Naive thymus-derived CD4-positive, alpha-beta T cell (primary cell): ENCODE measurements at regions of chr3 and their contacts with region 1.

Region 1: DNA sequence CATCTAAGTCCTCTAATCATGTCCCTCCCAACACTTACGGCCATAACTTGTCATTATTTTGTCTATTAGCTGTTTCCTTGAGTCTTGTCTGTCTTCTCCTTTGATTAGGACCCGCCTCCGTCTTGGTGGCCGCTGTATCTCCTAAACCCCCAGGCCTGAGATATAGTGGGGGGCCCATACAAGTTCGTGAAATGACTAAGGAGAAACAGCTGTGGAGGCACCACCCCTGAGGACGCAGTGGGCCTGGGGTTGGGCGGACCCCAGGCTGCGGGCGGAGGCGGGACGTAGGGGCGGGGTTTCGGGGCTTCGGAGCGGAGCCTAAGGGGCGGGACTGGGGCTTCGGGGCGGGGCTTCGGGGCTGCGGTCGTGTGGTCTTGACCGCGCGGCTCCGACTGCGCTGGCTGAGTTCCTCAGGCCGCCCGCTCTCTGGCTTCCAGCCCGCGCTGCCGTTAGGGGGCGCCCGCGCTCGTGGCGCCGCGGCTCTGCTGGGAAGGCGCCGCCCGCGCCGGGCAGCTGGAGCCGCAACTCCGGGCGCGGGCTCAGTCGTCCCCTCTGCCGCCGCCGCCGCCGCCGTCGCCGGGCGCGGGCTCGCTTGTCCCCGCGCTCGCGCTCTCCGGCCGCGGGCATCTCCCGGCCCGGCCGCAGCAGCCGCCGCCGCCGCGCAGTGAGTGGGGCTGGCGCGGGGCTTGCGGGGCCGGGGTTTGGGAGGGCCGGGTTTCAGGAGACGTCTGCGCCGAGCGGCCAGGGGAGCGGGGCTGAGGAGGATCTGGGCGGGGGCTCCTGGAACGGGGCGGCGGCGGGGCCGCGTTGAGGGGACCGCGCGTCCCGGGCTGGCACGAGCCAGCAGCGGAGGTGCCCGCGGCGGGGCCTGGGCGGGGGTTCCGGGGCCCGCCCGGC is at the start of gene KCTD6:
- DNase-seq: peak; percentile 72 to 95 (median 84)
- ATAC-seq: peak; percentile 93
- H3K4me3 ChIP-seq: peak within 1 kb of the TSS; percentile 95
- H3K4me3 Mint-ChIP-seq: peak within 1 kb of the TSS; percentile 92 to 99 (median 94)
- H3K27ac ChIP-seq: peak within 1 kb of the TSS; percentile 69
- H3K27ac Mint-ChIP-seq: peak within 1 kb of the TSS; percentile 83 to 97 (median 90)
- H3K4me1 ChIP-seq: peaks cover 22 to 25% of the 10 kb centered on the region in 2 donors
- H3K4me1 Mint-ChIP-seq: peaks cover 37 to 64% (median 59%) of the 10 kb centered on the region in 7 donors
- H3K27me3 ChIP-seq: no peaks in the 10 kb centered on the region
- H3K27me3 Mint-ChIP-seq: peaks cover 0 to 45% (median 0%) of the 10 kb centered on the region in 5 donors
- total RNA-seq, gene KCTD6: 4.8 to 14.2 (median 10.9) TPM

Region 2: DNA sequence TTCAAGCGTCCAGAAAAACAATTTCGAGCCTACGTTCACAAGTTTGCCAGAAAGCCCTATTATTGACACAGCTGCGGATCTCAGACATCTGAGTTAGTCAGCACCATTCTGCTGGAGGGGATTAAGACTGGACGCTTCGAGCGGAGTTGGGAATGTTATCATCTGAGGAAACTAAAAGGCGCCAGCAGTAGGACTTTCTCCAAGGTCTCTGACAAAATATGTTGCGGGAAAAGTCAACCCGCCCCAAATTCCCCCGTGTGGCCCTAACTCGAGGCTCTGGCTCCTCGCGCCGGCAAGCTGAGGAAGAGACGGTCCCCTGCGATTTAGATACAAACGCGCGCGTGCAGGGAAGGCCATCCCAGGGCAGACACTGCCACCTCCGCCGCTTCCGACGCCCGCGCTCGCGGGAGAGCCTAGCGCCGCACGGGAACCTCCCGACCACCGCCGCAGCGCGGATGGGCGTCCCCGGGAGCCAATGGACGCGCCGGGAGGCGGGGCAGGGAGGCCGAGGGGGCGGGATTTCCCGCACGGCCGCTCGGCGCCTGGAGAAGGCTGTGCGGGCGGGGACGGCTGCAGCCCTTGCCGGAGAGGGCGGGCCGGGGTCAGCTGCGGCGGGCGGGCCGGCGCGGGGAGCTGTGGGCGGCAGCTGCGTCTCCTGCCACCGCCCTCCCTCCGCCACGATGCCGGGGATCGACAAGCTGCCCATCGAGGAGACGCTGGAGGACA is 1264.4 kb before region 1 on chr3 and contains the start of gene APPL1:
- CTCF ChIA-PET with region 1: no interaction called
- POLR2A ChIA-PET with region 1: no interaction called
- intact Hi-C with region 1: loop called in 1 of 2 experiments (anchors 5 kb)
- DNase-seq: peak; percentile 76 to 97 (median 82)
- ATAC-seq: peak; percentile 96
- H3K4me3 ChIP-seq: peak within 1 kb of the TSS; percentile 88
- H3K4me3 Mint-ChIP-seq: peak within 1 kb of the TSS; percentile 89 to 95 (median 93)
- H3K27ac ChIP-seq: peak within 1 kb of the TSS; percentile 71
- H3K27ac Mint-ChIP-seq: peak within 1 kb of the TSS; percentile 72 to 90 (median 86)
- H3K4me1 ChIP-seq: peaks cover 9 to 12% of the 10 kb centered on the region in 2 donors
- H3K4me1 Mint-ChIP-seq: peaks cover 17 to 38% (median 29%) of the 10 kb centered on the region in 7 donors
- H3K27me3 ChIP-seq: no peaks in the 10 kb centered on the region
- H3K27me3 Mint-ChIP-seq: peaks cover 0 to 5% (median 0%) of the 10 kb centered on the region in 5 donors
- total RNA-seq, gene APPL1: 25.4 to 42.1 (median 29.2) TPM

Region 3: GRCh38 chr3:58237238-58237940 is 254.4 kb before region 1 on chr3 and contains the start of gene ABHD6:
- CTCF ChIA-PET with region 1: no interaction called
- POLR2A ChIA-PET with region 1: interaction called, 3 read pairs
- intact Hi-C with region 1: loop called (anchors 1 kb)
- DNase-seq: peak; percentile 58 to 95 (median 86)
- ATAC-seq: peak; percentile 91
- H3K4me3 ChIP-seq: peak within 1 kb of the TSS; percentile 86
- H3K4me3 Mint-ChIP-seq: peak within 1 kb of the TSS; percentile 84 to 98 (median 92)
- H3K27ac ChIP-seq: peak within 1 kb of the TSS; percentile 72
- H3K27ac Mint-ChIP-seq: peak within 1 kb of the TSS; percentile 50 to 87 (median 81)
- H3K4me1 ChIP-seq: peaks cover 6 to 12% of the 10 kb centered on the region in 2 donors
- H3K4me1 Mint-ChIP-seq: peaks cover 9 to 18% (median 13%) of the 10 kb centered on the region in 7 donors
- H3K27me3 ChIP-seq: no peaks in the 10 kb centered on the region
- H3K27me3 Mint-ChIP-seq: peaks cover 0 to 29% (median 13%) of the 10 kb centered on the region in 5 donors
- total RNA-seq, gene ABHD6: 3.1 to 7.3 (median 6.6) TPM

Region 4: DNA sequence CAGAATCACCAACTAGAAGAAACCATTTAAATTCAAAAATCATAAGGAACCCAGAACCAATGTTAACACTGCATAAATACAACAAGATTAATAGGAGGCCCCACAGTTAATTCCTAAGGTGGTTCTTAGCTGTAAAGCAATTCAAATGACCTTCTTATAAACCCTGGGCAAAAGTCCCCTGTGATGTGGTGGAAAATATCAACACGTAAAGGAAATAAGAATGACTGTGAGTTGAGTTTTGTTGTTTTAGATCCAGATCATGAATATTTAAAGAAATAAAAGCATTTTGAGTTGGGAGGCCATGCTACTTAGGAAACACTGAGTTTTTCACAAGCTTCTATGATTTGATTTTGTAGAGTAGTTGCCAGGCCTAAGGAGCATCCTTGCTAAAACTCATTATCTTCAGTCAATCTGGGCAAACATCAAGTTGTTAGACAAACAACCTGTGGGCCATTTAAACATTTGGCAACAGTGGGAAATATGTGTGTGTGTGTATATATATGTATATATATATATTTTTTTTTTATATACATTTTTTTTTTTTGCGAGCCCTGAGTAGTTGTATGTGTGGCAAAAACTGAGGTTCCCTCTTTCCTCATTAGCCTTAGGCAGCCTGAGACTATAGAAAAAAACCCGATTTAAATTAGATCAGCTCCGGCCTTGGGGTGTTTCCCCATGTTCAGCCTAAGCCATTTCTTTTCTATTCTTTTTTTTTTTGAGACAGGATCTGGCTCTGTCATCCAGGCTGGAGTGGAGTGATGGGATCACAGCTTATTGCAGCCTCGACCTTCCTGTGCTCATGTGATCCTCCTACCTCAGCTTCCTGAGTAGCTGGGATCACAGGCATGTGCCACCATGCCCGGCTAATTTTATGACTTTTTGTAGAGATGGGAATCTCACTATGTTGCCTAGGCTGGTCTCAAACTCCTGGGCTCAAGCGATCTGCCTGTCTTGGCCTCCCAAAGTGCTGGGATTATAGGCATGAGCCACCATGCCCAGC is 167.1 kb before region 1 on chr3:
- CTCF ChIA-PET with region 1: interaction called, 4 read pairs
- POLR2A ChIA-PET with region 1: no interaction called
- intact Hi-C with region 1: loop called in 1 of 2 experiments (anchors 1 kb)
- DNase-seq: peak in 1 of 9 donors; percentile 26
- ATAC-seq: peak; percentile 27
- H3K4me3 ChIP-seq: no peak overlapping the region
- H3K4me3 Mint-ChIP-seq: peak overlapping the region in 1 of 10 donors; percentile 24
- H3K27ac ChIP-seq: peak overlapping the region; percentile 14
- H3K27ac Mint-ChIP-seq: peak overlapping the region in 8 of 9 donors; percentile 25 to 85 (median 68)
- H3K4me1 ChIP-seq: no peaks in the 10 kb centered on the region
- H3K4me1 Mint-ChIP-seq: peaks cover 0 to 25% (median 18%) of the 10 kb centered on the region in 7 donors
- H3K27me3 ChIP-seq: no peaks in the 10 kb centered on the region
- H3K27me3 Mint-ChIP-seq: no peaks in the 10 kb centered on the region

Region 5: DNA sequence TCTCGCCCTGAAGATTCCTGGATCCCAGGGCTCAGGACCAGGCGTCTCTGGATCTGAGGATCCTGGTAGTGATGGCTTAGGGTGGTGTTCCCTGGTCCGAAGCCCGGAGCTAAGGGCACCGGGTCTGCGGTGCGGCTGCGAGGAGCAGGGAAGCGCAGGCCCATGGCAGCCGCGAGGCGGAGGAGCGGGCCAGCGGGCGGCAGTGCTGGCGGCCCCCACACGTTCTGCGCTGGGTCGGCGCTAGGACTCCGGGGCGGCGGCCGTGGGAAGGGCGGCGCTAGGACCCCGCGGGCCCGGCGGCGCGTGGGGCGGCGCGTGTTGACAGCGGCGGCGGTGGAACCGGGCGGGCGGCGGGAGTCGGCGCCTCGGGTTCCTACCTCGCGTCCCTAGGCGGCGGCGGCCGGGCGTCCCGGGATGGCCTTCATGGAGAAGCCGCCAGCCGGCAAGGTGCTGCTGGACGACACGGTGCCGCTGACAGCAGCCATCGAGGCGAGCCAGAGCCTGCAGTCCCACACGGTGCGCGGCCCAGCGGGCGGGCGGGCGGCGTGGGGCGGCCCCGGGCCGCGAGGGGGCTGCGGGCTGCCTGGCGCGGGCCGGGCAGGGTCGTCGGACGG is 159.1 kb before region 1 on chr3 and contains the start of gene PXK:
- CTCF ChIA-PET with region 1: interaction called, 7 read pairs
- POLR2A ChIA-PET with region 1: interaction called, 5 read pairs
- intact Hi-C with region 1: loop called (anchors 1 kb)
- DNase-seq: peak; percentile 63 to 89 (median 79)
- ATAC-seq: peak; percentile 94
- H3K4me3 ChIP-seq: peak within 1 kb of the TSS; percentile 68
- H3K4me3 Mint-ChIP-seq: peak within 1 kb of the TSS; percentile 83 to 100 (median 99)
- H3K27ac ChIP-seq: peak within 1 kb of the TSS; percentile 70
- H3K27ac Mint-ChIP-seq: peak within 1 kb of the TSS; percentile 65 to 97 (median 88)
- H3K4me1 ChIP-seq: peaks cover 20 to 22% of the 10 kb centered on the region in 2 donors
- H3K4me1 Mint-ChIP-seq: peaks cover 30 to 47% (median 38%) of the 10 kb centered on the region in 7 donors
- H3K27me3 ChIP-seq: no peaks in the 10 kb centered on the region
- H3K27me3 Mint-ChIP-seq: no peaks in the 10 kb centered on the region
- total RNA-seq, gene PXK: 17.3 to 38.9 (median 22.3) TPM

Region 6: DNA sequence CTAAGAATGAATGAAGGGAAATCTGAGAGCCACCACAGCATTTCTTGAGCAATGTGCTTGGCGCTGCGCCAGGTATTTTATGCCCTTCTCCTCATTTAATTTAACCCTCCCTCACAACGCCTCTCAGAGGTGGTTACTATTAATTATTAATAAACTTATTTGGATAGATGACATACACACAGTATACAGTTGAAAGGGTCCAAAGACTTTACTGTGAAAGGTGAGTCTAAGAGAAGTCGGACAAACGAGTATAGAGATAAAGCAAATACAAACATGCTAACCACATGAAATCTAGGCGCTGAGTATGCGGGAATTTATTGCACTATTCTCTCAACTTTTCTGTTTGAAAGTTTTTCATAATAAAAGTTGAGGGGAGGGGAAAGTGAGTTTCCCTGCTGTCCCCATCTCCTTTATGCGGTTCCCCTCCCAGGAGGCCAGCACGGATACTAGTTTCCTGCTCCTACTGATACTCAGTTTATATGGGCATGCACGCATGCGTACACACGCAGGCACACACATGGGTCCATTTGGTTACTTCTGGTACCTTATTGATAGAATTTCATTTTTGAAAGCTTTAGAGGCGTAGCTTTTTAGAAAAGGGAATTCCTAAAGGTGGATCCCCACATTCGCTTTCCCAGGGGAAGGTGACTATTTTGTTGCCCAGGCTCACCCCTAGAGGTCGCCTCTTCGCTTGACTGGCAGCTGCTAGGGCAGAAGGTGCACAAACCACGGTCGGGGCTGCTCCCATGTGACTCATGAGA is 28.4 kb before region 1 on chr3:
- CTCF ChIA-PET with region 1: no interaction called
- POLR2A ChIA-PET with region 1: no interaction called
- intact Hi-C with region 1: loop called (anchors 1 kb)
- DNase-seq: peak; percentile 16 to 76 (median 40)
- ATAC-seq: peak; percentile 98
- H3K4me3 ChIP-seq: peak overlapping the region; percentile 20
- H3K4me3 Mint-ChIP-seq: peak overlapping the region in 7 of 10 donors; percentile 34 to 65 (median 51)
- H3K27ac ChIP-seq: no peak overlapping the region
- H3K27ac Mint-ChIP-seq: no peak overlapping the region
- H3K4me1 ChIP-seq: peaks cover 4 to 7% of the 10 kb centered on the region in 2 donors
- H3K4me1 Mint-ChIP-seq: peaks cover 0 to 12% (median 6%) of the 10 kb centered on the region in 7 donors
- H3K27me3 ChIP-seq: no peaks in the 10 kb centered on the region
- H3K27me3 Mint-ChIP-seq: peaks cover 0 to 7% (median 0%) of the 10 kb centered on the region in 5 donors

Region 7: GRCh38 chr3:58471025-58471887 is 20.5 kb before region 1 on chr3:
- CTCF ChIA-PET with region 1: no interaction called
- POLR2A ChIA-PET with region 1: interaction called, 3 read pairs
- intact Hi-C with region 1: loop called in 1 of 2 experiments (anchors 1 kb)
- DNase-seq: peak in 1 of 9 donors; percentile 60
- ATAC-seq: peak; percentile 93
- H3K4me3 ChIP-seq: peak overlapping the region; percentile 19
- H3K4me3 Mint-ChIP-seq: peak overlapping the region in 2 of 10 donors; percentile 5 to 64
- H3K27ac ChIP-seq: no peak overlapping the region
- H3K27ac Mint-ChIP-seq: peak overlapping the region in 5 of 9 donors; percentile 53 to 89 (median 74)
- H3K4me1 ChIP-seq: peaks cover 0 to 28% of the 10 kb centered on the region in 2 donors
- H3K4me1 Mint-ChIP-seq: peaks cover 5 to 64% (median 22%) of the 10 kb centered on the region in 7 donors
- H3K27me3 ChIP-seq: no peaks in the 10 kb centered on the region
- H3K27me3 Mint-ChIP-seq: peaks cover 0 to 2% (median 0%) of the 10 kb centered on the region in 5 donors